K562 (cell line): ENCODE measurements at regions of chr1 and their contacts with region 1.

Region 1: GRCh38 chr1:243213045-243213787 is 41.9 kb downstream of the CEP170 start:
- DNase-seq: no peak
- ATAC-seq: peak; percentile 87
- H3K4me3 ChIP-seq: no peak overlapping the region
- H3K27ac ChIP-seq: no peak overlapping the region
- H3K4me1 ChIP-seq: no peaks in the 10 kb centered on the region; a peak in 1 of 5 replicates
- H3K27me3 ChIP-seq: no peaks in the 10 kb centered on the region
- CTCF ChIP-seq: no peak
- EP300 ChIP-seq: peak; percentile 46; the same call in 1 of the 2 replicates
- POLR2A ChIP-seq: no peak
- RAD21 ChIP-seq: peak in 1 of 2 experiments; percentile 40; a peak in 2 of 4 replicates

Region 2: DNA sequence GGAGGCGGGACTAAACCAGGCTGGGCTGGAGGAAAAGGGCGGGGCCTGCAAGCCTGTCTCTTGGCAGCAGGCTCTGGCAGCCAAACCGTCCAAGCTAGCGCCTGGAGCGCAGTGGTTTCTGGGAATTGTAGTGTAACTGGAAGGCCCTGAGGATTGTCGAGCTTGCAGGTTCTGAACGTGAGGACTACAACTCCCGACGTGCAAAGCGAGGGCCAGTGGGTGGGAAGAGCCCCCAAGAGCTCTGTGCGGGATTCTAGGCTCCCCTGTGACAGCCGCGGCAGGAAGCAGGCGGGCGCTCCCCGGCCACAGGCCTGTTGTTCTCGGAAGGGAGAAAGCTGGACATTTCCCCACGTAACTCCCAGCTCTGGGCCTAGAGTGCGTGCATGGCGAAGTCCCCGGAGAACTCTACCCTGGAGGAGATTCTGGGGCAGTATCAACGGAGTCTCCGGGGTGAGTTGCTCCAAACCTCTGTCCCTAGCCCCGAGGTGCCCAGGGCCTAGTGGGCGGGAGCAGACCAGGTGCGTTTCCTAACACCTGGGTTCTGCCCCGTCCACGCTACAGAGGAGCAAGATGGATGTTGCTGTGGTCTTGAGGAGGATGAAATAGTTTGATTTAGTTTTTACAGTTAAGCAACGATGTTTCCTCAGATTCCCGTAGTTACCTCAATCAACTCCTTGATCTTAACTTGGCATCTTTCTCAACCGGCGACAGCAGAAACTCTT is 42.7 kb after region 1 on chr1 and contains the start of gene SDCCAG8:
- CTCF ChIA-PET with region 1: no interaction called
- POLR2A ChIA-PET with region 1: no interaction called
- in situ Hi-C with region 1: no loop called
- intact Hi-C with region 1: loop called (anchors 2 kb)
- DNase-seq: peak; percentile 91 to 100 (median 94)
- ATAC-seq: peak; percentile 81
- H3K4me3 ChIP-seq: peak within 1 kb of the TSS; percentile 82
- H3K27ac ChIP-seq: peak within 1 kb of the TSS; percentile 97
- H3K4me1 ChIP-seq: peaks cover 9 to 13% of the 10 kb centered on the region in 2 experiments
- H3K27me3 ChIP-seq: no peaks in the 10 kb centered on the region
- CTCF ChIP-seq: no peak
- EP300 ChIP-seq: peak; percentile 46
- POLR2A ChIP-seq: peak; percentile 93
- RAD21 ChIP-seq: 0 out of 4 replicates have a peak, but pooled peaks of 1 of the 2 experiments have one; percentile 17
- polyA plus RNA-seq, gene SDCCAG8: 21.6 to 29.6 TPM

Region 3: DNA sequence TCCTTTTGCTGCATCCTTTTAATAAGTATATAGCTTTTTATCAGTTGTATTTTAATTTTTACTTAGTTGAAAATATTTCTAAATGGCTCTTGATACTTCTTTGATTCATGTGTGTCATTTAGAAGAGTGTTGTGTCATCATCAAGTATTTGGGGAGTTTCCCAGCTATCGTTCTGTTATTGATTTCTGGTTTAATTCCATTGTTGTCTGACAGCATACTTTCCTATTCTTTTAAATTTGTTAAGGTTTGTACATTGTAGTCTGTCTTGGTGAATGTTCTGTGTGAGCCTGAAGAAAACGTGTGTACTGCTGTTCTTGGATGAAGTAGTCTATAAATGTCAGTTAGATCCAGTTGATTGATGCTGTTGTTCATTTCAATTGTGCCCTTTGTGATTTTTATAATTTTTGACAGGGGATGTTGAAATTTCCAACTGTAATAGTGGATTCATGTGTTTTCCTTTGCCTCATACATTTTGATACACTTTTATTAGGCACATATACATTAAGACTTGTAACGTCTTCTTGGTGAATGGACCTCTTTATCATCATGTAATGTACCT is 67.4 kb after region 1 on chr1:
- CTCF ChIA-PET with region 1: no interaction called
- POLR2A ChIA-PET with region 1: no interaction called
- in situ Hi-C with region 1: no loop called
- intact Hi-C with region 1: no loop called
- DNase-seq: no peak
- ATAC-seq: no peak
- H3K4me3 ChIP-seq: no peak overlapping the region
- H3K27ac ChIP-seq: no peak overlapping the region
- H3K4me1 ChIP-seq: peaks cover 0 to 5% of the 10 kb centered on the region in 2 experiments; a peak in 2 of 5 replicates
- H3K27me3 ChIP-seq: no peaks in the 10 kb centered on the region
- CTCF ChIP-seq: no peak
- EP300 ChIP-seq: no peak
- POLR2A ChIP-seq: no peak
- RAD21 ChIP-seq: no peak